CD14-positive monocyte (primary cell): ENCODE measurements at regions of chr12 and their contacts with region 1.

Region 1: DNA sequence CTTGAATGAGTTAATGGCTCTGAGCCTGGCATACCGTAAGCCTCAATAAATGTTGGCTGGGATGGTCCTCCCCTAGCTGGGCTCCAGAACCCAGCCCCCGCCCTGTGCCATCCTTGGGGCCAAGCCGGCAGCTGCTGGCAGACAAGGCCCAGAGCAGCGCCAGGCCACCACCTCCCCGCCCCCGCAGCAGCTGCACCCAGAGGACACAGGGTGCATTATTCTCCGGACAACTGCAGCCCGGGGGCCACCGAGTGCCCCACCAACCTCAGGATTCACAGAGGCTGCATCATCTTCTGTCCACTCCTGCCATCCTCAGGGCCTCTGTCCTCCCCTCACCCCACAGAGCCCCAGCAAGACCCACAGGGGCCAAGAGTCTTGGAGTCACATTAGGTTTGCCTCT is 92.7 kb downstream of the NCOR2 start:
- DNase-seq: no peak
- H3K4me3 ChIP-seq: no peak overlapping the region
- H3K4me3 Mint-ChIP-seq: no peak overlapping the region
- H3K27ac ChIP-seq: no peak overlapping the region
- H3K27ac Mint-ChIP-seq: peak overlapping the region in 3 of 7 donors; percentile 12 to 79 (median 44)
- H3K4me1 ChIP-seq: no peaks in the 10 kb centered on the region
- H3K4me1 Mint-ChIP-seq: peaks cover 8% of the 10 kb centered on the region
- H3K27me3 ChIP-seq: no peaks in the 10 kb centered on the region
- H3K27me3 Mint-ChIP-seq: peaks cover 0 to 1% (median 0%) of the 10 kb centered on the region in 3 donors
- CTCF ChIP-seq: no peak

Region 2: GRCh38 chr12:124332068-124332672 is 142.5 kb before region 1 on chr12:
- intact Hi-C with region 1: no loop called
- DNase-seq: no peak
- H3K4me3 ChIP-seq: no peak overlapping the region
- H3K4me3 Mint-ChIP-seq: no peak overlapping the region
- H3K27ac ChIP-seq: no peak overlapping the region
- H3K27ac Mint-ChIP-seq: peak overlapping the region in 1 of 7 donors; percentile 28
- H3K4me1 ChIP-seq: no peaks in the 10 kb centered on the region
- H3K4me1 Mint-ChIP-seq: no peaks in the 10 kb centered on the region
- H3K27me3 ChIP-seq: no peaks in the 10 kb centered on the region
- H3K27me3 Mint-ChIP-seq: no peaks in the 10 kb centered on the region
- CTCF ChIP-seq: no peak

Region 3: GRCh38 chr12:124388679-124389536 is 85.8 kb before region 1 on chr12:
- intact Hi-C with region 1: no loop called
- DNase-seq: peak; percentile 66 to 86 (median 77)
- H3K4me3 ChIP-seq: peak overlapping the region; percentile 55 to 85 (median 61)
- H3K4me3 Mint-ChIP-seq: peak overlapping the region; percentile 91 to 98
- H3K27ac ChIP-seq: peak overlapping the region; percentile 99 to 100
- H3K27ac Mint-ChIP-seq: peak overlapping the region; percentile 78 to 100 (median 100)
- H3K4me1 ChIP-seq: peaks cover 65 to 66% of the 10 kb centered on the region in 2 donors
- H3K4me1 Mint-ChIP-seq: peaks cover 54% of the 10 kb centered on the region
- H3K27me3 ChIP-seq: no peaks in the 10 kb centered on the region
- H3K27me3 Mint-ChIP-seq: peaks cover 0 to 2% (median 2%) of the 10 kb centered on the region in 3 donors
- CTCF ChIP-seq: peak; percentile 12

Region 4: DNA sequence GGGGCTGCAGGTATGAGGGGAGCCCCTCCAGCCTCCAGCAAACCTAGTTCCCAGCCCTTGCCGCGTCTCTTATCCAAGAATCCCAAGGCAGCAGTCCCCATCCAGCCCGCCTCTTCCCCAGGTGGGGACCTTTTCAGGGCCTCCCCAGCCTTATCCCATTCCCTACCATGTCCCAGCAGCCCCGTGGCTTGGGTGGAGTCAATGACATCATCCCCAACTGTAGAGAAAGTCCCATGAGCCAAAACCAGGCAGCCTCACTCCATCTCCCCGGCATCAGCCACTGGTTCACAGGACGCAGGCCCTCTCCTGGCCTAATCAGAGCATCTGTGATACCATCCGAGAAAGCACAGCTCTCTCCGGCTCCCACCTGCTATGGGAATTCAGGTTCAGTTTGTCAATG is 38.3 kb before region 1 on chr12:
- intact Hi-C with region 1: loop called in 1 of 2 experiments (anchors 5 kb)
- DNase-seq: no peak
- H3K4me3 ChIP-seq: no peak overlapping the region
- H3K4me3 Mint-ChIP-seq: no peak overlapping the region
- H3K27ac ChIP-seq: no peak overlapping the region
- H3K27ac Mint-ChIP-seq: peak overlapping the region in 2 of 7 donors; percentile 42 to 51
- H3K4me1 ChIP-seq: peaks cover 18 to 22% of the 10 kb centered on the region in 2 donors
- H3K4me1 Mint-ChIP-seq: peaks cover 20% of the 10 kb centered on the region
- H3K27me3 ChIP-seq: no peaks in the 10 kb centered on the region
- H3K27me3 Mint-ChIP-seq: peaks cover 0 to 6% (median 0%) of the 10 kb centered on the region in 3 donors
- CTCF ChIP-seq: no peak